Dorsolateral prefrontal cortex (tissue), 120 donors: ENCODE measurements at regions of chr1 and their contacts with region 1.

Region 1: DNA sequence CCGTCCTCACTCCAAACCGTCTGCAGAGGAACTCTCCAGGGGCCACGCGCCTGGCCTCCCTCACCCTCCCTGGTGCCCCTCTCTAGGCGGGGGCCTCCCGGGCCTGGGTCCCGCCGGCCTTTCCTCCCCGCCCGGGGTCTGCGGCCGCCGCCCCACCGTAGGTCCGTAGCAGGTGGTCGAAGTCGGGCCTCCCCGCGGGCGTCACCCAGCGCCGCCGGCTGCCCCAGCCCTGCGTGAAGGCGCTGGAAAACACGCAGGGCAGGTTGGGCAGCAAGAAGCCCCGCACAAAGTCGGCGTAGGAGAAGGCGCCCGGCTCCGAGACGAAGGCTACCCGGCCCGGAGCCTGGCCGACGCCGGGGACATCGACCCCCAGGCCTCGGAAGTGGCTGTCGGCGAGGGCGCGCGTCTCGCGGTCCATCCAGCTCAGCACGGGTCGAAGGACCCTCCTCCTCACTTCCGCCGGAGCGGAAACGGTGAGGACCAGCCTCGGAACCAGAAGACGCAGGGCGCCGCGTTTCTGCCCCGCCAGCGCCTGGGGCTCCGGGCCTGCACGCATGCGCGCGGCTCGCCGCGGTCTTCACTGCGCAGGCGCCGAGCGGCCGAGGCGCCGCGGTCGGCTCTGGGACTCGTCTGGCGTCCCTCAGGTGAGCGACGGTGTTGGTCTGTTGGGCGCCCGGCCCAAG is at the starts of genes JMJD4 and SNAP47:
- DNase-seq: peak; percentile 78 to 92 (median 88)
- H3K4me3 ChIP-seq: peak within 1 kb of the TSS; percentile 74 to 100 (median 93)
- H3K27ac ChIP-seq: peak within 1 kb of the TSS; percentile 29 to 97 (median 81)
- H3K27me3 ChIP-seq: no peaks in the 10 kb centered on the region
- CTCF ChIP-seq: peak in 36 of 56 donors; percentile 10 to 64 (median 34)
- total RNA-seq, gene JMJD4: 7.0 to 20.5 (median 13.3) TPM
- total RNA-seq, gene SNAP47: 39.7 to 102 (median 75.0) TPM

Region 2: DNA sequence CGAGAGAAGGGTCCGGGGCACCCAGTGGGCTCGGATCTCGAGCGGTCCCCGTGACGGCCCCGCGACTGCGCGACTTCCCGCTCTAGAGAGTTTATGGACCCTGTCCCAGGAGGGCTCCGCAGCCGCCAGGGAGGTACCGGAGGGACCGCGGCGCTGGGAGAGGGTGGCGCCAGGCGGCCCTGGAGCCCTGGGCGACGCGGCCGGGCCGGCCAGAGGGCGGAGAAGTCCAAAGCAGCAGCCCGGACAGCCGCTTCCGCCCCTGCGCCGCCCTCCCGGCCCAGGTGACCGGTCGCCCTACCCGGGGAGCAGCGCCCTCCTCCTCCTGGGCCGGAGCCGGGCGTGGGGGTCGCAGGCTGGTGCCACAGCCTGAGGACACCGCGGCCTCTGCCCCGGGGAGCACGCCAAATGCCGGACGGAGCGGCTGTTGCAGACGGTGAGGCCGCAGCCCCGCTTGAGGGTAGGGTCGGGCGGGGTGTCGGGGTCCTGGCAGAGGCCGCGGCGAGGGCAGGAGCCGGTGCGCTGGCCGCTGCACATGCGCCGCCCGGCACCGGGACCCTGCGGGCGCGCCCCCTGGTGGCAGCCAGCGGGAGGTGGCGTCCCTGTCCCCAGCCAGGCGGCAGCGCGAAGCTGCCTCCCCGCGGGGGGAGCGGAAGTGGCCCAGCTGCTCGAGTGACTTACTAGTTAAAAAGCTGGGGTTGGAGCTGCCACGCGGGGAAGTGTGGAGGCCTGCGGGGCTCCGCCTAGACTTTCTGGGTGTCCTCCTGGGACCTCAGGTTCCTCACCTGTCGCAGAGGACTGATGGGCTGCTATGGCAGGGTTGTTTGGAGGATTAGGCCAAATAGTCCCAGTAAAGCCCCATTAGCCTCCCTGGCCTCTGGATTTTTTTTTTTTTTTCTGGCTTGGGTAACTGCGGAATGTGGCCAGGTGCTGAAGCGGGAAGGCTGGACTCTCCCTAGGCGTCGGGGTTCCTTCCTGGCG is 192.6 kb before region 1 on chr1:
- intact Hi-C with region 1: loop called in 1 of 2 experiments (anchors 5 kb)
- DNase-seq: peak; percentile 59 to 90 (median 77)
- H3K4me3 ChIP-seq: peak overlapping the region; percentile 54 to 88 (median 77)
- H3K27ac ChIP-seq: peak overlapping the region in 39 of 59 donors; percentile 2 to 84 (median 52)
- H3K27me3 ChIP-seq: no peaks in the 10 kb centered on the region
- CTCF ChIP-seq: peak; percentile 78 to 100 (median 96)

Region 3: DNA sequence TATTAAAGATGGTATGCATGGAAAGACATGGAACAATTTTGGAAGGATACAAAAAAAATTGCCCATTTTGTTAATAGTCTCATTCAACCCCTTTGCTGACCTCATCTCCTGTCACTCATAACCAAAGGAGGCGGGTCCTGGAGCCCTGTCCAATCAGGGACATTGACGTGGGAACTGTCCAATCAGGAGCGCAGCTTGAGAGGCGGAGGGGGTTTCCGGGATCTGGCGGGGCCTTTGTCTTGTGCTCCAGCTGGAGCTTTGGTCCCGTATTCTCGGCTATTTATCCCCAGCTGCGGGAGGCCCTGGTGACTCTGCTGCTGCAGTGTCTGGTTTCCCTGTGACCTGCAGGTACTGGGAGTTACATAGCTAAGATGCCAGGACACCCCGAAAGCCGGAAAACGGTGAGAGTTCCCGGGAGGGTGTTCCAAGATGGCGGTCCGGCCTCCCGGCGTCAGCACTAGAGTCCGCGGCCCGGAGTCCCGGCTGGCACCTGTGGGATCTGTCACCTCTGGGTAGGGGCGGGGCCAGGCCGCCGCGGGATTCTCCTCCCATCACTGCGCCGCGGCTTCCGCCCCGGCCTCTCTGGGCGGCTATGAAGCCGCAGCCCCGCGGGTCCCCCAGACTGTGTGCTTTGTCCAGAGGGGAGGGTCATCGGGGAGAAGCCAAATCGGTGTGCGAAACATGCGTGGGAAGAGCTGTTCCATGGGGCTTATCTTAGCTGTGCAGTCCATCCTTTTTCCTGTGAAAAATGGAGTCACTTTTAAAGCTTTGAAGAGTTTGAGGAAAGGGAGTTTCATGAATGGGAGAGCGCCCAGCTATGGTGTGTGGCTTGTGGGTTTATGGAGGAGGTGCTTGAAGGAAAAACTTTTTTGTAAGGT is 171.4 kb before region 1 on chr1 and contains the start of gene ZNF678:
- intact Hi-C with region 1: loop called in 1 of 2 experiments (anchors 5 kb)
- DNase-seq: peak; percentile 86 to 95 (median 94)
- H3K4me3 ChIP-seq: peak within 1 kb of the TSS; percentile 57 to 99 (median 85)
- H3K27ac ChIP-seq: peak within 1 kb of the TSS in 50 of 59 donors; percentile 13 to 86 (median 68)
- H3K27me3 ChIP-seq: peaks cover 0 to 33% (median 19%) of the 10 kb centered on the region in 45 donors
- CTCF ChIP-seq: peak in 10 of 56 donors; percentile 8 to 27 (median 13)
- total RNA-seq, gene ZNF678: 6.6 to 16.3 (median 10.9) TPM

Region 4: GRCh38 chr1:227762233-227762911 is 27.4 kb after region 1 on chr1:
- intact Hi-C with region 1: loop called (anchors 2 kb)
- DNase-seq: peak; percentile 72 to 90 (median 85)
- H3K4me3 ChIP-seq: peak overlapping the region in 10 of 59 donors; percentile 1 to 34 (median 12)
- H3K27ac ChIP-seq: peak overlapping the region in 50 of 59 donors; percentile 14 to 94 (median 66)
- H3K27me3 ChIP-seq: no peaks in the 10 kb centered on the region
- CTCF ChIP-seq: peak; percentile 73 to 94 (median 87)

Region 5: DNA sequence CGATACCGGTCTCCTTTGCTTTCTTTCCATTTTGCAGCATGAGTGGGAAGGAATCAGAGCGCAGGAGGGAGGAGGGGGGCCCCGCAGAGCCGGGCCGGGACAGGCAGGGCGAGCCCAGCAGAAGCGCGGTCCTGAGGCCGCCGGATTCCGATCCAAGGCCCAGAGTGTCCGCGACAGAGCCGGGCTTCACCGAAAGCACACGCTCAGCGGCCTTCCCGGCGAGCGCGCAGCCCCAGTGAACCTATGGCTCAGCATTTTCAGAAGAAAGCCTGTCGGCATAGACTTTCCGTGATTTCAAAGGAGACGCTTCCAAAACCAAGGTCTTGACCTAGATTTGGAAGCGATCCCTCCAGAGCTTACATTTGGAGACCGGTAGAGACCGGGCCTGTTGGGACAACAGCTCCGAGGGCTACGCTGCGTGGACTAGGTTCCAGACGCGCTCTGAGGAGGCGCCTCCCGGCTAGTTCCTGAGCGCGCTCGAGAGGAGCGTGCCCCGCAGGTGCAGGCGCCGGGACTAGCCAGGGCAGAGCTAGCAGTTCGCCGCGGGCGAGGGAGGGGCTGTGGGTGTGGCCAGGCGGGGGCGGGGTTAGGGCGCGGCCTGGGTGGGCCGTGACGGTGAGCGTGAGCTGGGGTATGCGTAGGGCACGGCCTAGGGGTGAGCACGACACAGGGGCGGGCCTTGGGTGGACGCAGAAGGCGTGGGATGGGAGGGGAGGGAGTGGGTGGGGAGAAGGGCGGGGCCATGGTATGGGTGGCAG is 52.7 kb after region 1 on chr1:
- intact Hi-C with region 1: no loop called
- DNase-seq: peak in 8 of 10 donors; percentile 46 to 95 (median 70)
- H3K4me3 ChIP-seq: peak overlapping the region; percentile 41 to 83 (median 70)
- H3K27ac ChIP-seq: peak overlapping the region in 46 of 59 donors; percentile 4 to 87 (median 62)
- H3K27me3 ChIP-seq: no peaks in the 10 kb centered on the region
- CTCF ChIP-seq: no peak

Region 6: GRCh38 chr1:228090613-228091081 is 355.6 kb after region 1 on chr1:
- intact Hi-C with region 1: loop called in 1 of 2 experiments (anchors 10 kb)
- DNase-seq: peak in 3 of 10 donors; percentile 29 to 42 (median 32)
- H3K4me3 ChIP-seq: peak overlapping the region in 2 of 59 donors; percentile 2 to 18
- H3K27ac ChIP-seq: peak overlapping the region in 36 of 59 donors; percentile 2 to 82 (median 58)
- H3K27me3 ChIP-seq: no peaks in the 10 kb centered on the region
- CTCF ChIP-seq: no peak

Region 7: DNA sequence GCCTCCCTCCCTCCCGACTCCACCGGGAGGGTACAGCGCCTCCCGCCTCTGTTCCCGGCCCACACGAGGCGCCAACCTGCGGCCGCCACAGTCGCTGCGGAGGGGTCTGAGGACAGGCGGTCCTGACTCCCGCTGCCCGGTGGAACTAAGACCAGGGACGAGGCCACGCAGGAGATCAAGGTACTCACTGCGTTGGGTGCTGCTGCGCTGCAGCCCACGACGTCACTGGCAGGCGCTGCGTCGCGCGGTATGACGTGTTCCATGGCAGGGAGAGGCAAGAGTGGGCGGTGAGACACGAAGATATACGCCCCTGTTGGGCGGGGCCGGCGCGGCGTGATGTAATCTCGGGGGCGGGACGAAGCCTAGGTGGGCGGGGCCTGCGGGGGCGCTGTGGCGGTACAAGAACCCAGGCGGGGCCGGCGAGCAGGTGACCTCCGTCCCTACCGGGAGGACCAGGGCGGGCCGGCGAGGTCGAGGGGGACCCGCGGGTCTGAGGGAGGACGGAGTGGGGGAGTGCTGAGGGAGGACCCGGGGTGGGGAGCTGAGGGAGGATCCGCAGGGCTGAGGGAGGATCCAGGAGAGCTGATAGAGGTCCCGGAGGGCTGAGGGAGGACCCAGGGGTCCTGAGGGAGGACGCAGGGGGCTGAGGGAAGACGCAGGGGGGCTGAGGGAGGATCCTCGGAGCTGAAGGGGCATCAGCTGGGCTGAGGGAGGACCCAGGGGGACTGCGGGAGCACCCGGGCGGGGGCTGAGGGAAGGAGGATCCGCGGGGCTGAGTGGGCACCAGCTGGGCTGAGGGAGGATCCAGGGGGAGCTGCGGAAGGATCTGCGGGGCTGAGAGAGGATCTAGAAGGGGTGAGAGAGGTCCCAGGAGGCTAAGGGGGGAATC is 374.3 kb after region 1 on chr1 and contains the start of gene MRPL55:
- intact Hi-C with region 1: loop called in 1 of 2 experiments (anchors 10 kb)
- DNase-seq: peak; percentile 99 to 100 (median 100)
- H3K4me3 ChIP-seq: peak within 1 kb of the TSS; percentile 71 to 100 (median 98)
- H3K27ac ChIP-seq: peak within 1 kb of the TSS; percentile 58 to 98 (median 88)
- H3K27me3 ChIP-seq: no peaks in the 10 kb centered on the region
- CTCF ChIP-seq: peak in 45 of 56 donors; percentile 13 to 65 (median 34)
- total RNA-seq, gene MRPL55: 31.4 to 79.7 (median 54.4) TPM